KBM-7 (cell line): ENCODE measurements at regions of chr19 and their contacts with region 1.

Region 1: DNA sequence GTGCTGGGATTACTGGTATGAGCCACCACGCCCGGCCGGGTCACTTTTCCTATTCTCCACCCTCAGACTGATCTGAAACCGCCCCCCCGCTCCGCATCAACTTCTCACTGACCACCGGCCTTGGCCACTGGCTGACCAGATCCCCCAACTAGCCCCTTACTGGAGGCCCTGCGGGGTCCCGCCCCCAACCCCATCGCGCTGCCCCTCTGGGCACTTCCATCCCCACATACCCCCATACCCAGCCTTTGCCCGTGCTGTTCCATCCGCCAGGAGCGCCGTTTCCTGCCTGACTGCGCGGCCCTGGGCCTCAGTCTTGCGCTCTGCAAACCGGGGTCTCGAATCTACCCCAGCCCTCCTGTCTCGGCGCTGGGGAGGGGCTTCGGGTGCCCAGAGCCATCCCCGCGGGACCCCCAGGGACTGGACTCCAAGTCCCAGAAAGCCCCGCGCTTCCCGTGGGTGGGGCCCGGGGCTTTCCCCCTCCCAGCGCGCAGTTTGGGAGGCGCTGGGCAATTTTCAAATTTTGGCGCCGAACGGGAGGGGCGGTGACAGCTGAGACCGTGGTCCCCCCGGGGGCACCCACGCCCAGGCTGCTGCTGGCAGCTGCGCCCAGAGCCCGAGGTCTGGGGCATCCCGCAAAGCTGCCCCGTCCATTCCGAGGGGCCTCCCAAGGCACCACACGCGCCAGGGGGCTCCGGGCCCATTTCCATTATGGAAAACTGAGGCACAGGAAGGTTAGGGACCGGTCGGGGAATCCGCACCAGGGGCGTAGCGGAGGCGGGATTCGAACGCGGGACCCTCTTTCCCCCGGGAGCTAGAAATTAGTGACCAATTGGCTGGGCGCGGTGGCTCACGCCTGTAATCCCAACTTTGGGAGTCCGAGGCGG is 5.2 kb upstream of the LMNB2 start:
- DNase-seq: no peak

Region 2: DNA sequence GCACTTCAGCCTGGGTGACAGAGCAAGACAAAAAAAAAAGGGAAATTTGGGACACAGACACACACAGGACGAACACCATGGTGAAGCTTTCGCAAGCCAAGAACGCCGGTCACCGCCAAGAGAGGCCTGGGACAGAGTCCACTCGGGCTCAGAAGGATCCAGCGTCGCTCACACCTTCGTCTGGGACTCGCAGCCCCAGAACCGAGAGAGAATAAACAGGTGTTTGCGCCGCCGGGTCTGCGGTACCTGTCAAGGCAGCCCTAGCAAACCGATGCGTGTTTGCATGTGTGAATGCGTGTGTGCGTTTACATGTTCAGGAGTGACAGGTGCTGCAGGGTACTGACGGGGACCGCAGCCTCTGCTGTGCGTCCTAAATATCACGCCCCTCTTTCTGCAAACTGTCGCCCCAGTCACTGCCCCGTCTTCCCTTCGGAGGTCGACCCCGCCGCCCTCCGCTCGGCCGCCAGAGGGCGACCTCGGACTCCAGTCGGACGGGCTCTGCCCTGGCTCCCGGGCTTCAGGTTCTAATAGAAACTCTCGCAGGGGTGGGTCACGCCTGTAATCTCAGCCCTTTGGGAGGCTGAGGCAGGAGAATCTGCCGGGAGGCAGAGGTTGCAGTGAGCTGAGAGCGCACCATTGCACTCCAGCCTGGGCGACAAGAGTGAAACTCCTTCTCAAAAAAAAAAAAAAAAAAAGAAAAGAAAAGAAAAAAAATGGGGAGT is 532.8 kb before region 1 on chr19:
- in situ Hi-C with region 1: no loop called
- DNase-seq: peak; percentile 83

Region 3: DNA sequence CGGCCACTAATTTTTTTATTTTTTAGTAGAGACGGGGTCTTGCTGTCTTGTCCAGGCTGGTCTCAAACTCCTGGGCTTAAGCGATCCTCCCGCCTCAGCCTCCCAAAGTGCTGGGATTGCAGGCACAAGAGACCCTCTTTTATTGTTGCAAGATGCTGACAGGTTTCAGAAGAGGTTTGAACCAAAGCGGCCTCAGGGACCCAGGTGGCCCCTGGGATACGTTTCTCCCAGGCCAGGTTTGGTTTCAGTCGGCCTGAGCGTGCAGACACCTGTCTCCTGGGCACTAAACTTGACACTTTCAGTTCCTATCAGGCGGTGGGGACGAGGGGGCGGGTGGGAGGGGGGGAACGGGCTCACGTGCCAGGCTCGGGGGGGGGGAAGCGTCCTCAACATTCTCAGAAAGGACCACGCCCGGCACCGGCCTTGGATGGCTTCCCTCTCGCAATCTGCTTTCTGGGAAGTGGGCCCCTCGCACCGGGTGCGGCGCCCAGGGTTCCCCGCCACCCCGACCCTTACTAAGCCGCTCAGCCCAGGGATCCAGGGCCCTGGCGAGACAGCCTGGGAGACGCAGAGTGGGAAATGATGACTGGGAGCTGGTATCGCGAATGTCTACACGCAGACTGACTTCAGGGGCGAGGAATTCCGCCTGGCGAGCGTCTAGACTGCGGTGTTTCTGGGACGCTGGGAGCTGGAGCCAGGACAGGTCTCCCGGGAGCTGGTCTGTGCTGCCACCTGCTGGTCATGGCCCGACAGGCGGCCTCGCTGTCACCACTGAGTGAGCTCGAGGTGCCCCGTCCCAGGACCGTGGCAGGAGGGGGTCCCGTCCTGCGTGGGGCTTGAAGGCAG is 148.9 kb after region 1 on chr19:
- in situ Hi-C with region 1: loop called (anchors 10 kb)
- DNase-seq: peak; percentile 83